ENCODE measurements at regions of chr1 and their contacts with region 1.

Region 1: DNA sequence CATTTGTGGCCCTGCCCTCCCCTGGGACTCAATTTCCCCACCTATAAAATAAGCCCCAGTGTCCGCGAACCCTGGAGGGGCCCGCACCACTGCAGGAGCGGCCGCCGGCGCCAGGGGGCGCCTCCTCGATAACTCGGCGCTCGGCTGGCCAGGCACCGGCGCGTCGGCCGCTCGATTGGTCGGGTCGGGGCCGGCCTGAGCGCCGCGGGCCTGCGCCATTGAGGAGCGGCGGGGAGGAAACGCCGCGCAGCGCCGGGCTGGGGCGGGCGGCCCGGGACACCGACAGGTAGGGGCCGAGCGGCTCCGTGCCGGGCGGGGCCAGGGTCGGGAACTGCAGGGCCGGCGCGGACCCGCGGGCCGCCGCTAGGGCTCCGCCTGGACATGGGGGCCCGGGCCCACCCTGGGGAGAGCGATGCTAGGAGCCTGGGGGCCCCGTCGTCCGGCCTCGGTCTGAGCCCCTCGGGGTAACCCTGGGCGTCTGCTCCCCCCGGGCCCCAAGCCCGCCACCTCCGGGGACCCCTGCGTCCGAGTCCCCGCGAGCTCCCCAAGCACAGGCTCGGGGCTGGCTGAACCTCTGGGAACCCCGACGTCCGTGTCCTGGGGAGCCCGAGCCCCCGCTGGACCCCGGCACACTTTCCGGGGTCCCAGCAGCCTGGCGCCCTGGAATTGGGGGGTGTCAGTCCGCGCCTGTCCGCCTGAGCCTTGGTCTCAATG is at the start of gene VPS13D:
- DNase-seq: peak; percentile 86
- H3K4me3 Mint-ChIP-seq: peak within 1 kb of the TSS; percentile 80
- H3K27ac Mint-ChIP-seq: no peak within 1 kb of the TSS
- H3K4me1 Mint-ChIP-seq: peaks cover 21% of the 10 kb centered on the region
- H3K27me3 Mint-ChIP-seq: no peaks in the 10 kb centered on the region
- total RNA-seq, gene VPS13D: 20.0 to 23.3 TPM

Region 2: GRCh38 chr1:12100071-12100470 is 129.9 kb before region 1 on chr1:
- CTCF ChIA-PET with region 1: interaction called, 10 read pairs
- intact Hi-C with region 1: no loop called
- DNase-seq: no peak
- H3K4me3 Mint-ChIP-seq: no peak overlapping the region
- H3K27ac Mint-ChIP-seq: no peak overlapping the region
- H3K4me1 Mint-ChIP-seq: peaks cover 2% of the 10 kb centered on the region
- H3K27me3 Mint-ChIP-seq: no peaks in the 10 kb centered on the region

Region 3: GRCh38 chr1:12113433-12114339 is 116.3 kb before region 1 on chr1:
- CTCF ChIA-PET with region 1: interaction called, 11 read pairs
- intact Hi-C with region 1: no loop called
- DNase-seq: no peak
- H3K4me3 Mint-ChIP-seq: no peak overlapping the region
- H3K27ac Mint-ChIP-seq: no peak overlapping the region
- H3K4me1 Mint-ChIP-seq: peaks cover 4% of the 10 kb centered on the region
- H3K27me3 Mint-ChIP-seq: no peaks in the 10 kb centered on the region

Region 4: GRCh38 chr1:12191242-12192032 is 38.6 kb before region 1 on chr1:
- CTCF ChIA-PET with region 1: no interaction called
- intact Hi-C with region 1: no loop called
- DNase-seq: no peak
- H3K4me3 Mint-ChIP-seq: no peak overlapping the region
- H3K27ac Mint-ChIP-seq: no peak overlapping the region
- H3K4me1 Mint-ChIP-seq: peaks cover 14% of the 10 kb centered on the region
- H3K27me3 Mint-ChIP-seq: no peaks in the 10 kb centered on the region

Region 5: GRCh38 chr1:12208764-12209494 is 21.1 kb before region 1 on chr1:
- CTCF ChIA-PET with region 1: interaction called, 4 read pairs
- intact Hi-C with region 1: loop called (anchors 2 kb)
- DNase-seq: peak; percentile 95
- H3K4me3 Mint-ChIP-seq: no peak overlapping the region
- H3K27ac Mint-ChIP-seq: peak overlapping the region; percentile 37
- H3K4me1 Mint-ChIP-seq: peaks cover 42% of the 10 kb centered on the region
- H3K27me3 Mint-ChIP-seq: no peaks in the 10 kb centered on the region

Region 6: DNA sequence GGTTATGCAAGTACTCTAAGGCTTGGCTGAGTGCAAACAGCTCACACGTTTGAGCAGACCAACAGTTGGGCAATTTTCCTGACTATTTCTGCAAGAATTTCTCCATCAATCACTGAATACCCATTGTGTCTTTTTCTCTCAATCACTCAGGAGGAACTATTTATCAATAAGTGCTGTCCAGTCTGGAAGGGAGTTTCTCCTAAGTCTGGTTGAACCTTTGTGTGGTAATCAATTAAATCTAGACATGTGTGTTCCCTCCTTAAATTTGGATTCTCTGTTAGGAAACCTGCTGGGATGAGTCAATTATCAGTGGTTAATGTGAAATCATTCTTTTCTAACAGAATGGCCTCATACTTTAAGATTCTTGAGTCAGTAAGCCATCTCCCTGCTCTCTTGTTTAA is 479.1 kb after region 1 on chr1:
- CTCF ChIA-PET with region 1: no interaction called
- intact Hi-C with region 1: no loop called
- DNase-seq: no peak
- H3K4me3 Mint-ChIP-seq: no peak overlapping the region
- H3K27ac Mint-ChIP-seq: no peak overlapping the region
- H3K4me1 Mint-ChIP-seq: no peaks in the 10 kb centered on the region
- H3K27me3 Mint-ChIP-seq: peaks cover under 1% of the 10 kb centered on the region

Measured in activated naive CD4-positive, alpha-beta T cell treated with anti-CD3 and anti-CD28 coated beads for 36 hours (primary cell).